HCT116 (cell line): ENCODE measurements at regions of chr11 and their contacts with region 1.

Region 1: GRCh38 chr11:128026596-128026995 is 560.8 kb downstream of the ETS1 start:
- DNase-seq: no peak
- ATAC-seq: no peak
- H3K4me3 ChIP-seq: no peak overlapping the region
- H3K27ac ChIP-seq: no peak overlapping the region
- H3K4me1 ChIP-seq: no peaks in the 10 kb centered on the region
- H3K27me3 ChIP-seq: no peaks in the 10 kb centered on the region
- CTCF ChIP-seq: no peak
- POLR2A ChIP-seq: no peak
- RAD21 ChIP-seq: no peak

Region 2: DNA sequence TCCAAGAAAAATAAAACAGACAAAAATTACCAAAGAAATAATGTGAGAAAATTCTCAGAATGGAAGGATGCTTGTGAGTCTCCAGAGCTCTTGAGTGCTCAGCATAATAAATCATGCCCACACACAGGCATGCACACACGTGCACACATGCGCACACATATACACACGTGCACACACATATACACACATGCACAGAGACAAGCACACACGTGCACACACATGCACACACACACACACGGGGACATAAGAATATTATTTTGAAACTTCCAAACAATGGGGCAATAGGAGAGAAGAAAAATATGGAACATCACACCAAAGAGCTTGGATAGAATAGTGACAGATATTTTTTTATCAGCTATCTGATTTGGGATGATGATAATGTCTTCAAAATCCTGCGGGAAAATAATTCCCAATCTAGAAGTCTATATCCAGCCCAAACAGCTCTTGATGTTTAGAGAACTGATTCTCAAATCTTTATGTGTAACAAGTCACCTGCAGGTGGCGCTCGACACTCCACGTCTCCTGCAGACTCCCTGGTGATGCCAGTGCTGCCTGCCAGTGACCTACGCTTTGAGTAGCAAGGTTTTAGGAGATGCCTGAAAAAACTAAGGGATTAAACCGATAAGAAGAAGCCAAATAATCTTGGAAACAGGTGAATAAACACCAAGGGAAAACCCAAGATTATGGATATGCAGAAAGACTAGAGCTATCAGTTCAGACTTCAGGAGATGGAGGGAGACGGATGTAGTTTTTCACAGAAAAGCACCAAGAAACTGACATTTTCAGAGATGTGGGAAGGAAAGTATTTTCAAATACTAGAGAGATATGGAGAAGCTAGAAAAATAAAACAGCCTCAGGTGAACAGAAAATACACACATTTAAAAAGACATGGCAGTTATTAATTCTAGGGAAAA is 182.9 kb before region 1 on chr11:
- CTCF ChIA-PET with region 1: no interaction called
- POLR2A ChIA-PET with region 1: no interaction called
- RAD21 ChIA-PET with region 1: no interaction called
- intact Hi-C with region 1: no loop called
- DNase-seq: no peak
- ATAC-seq: no peak
- H3K4me3 ChIP-seq: no peak overlapping the region
- H3K27ac ChIP-seq: no peak overlapping the region
- H3K4me1 ChIP-seq: no peaks in the 10 kb centered on the region
- H3K27me3 ChIP-seq: no peaks in the 10 kb centered on the region
- CTCF ChIP-seq: peak in 1 of 3 experiments; percentile 57; a peak in 3 of 6 replicates
- POLR2A ChIP-seq: no peak
- RAD21 ChIP-seq: no peak

Region 3: DNA sequence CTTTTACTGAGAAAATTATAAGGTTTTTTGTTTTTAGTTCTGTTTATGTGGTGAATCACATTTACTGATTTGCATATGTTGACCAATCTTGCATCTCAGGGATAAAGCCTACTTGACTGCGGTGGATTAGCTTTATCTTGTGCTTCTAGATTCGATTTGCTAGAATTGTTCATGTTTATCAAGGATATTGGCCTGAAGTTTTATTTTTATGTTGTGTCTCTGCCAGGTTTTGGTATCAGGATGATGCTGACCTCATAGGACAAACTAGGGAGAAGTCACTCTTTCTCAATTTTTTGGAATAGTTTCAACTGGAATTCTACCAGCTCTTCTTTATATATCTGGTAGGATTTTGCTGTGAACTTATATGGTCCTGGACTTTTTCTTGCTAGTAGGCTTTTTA is 56.0 kb after region 1 on chr11:
- CTCF ChIA-PET with region 1: no interaction called
- POLR2A ChIA-PET with region 1: no interaction called
- RAD21 ChIA-PET with region 1: no interaction called
- intact Hi-C with region 1: no loop called
- DNase-seq: no peak
- ATAC-seq: no peak
- H3K4me3 ChIP-seq: no peak overlapping the region
- H3K27ac ChIP-seq: no peak overlapping the region
- H3K4me1 ChIP-seq: no peaks in the 10 kb centered on the region
- H3K27me3 ChIP-seq: no peaks in the 10 kb centered on the region
- CTCF ChIP-seq: no peak
- POLR2A ChIP-seq: no peak
- RAD21 ChIP-seq: no peak

Region 4: DNA sequence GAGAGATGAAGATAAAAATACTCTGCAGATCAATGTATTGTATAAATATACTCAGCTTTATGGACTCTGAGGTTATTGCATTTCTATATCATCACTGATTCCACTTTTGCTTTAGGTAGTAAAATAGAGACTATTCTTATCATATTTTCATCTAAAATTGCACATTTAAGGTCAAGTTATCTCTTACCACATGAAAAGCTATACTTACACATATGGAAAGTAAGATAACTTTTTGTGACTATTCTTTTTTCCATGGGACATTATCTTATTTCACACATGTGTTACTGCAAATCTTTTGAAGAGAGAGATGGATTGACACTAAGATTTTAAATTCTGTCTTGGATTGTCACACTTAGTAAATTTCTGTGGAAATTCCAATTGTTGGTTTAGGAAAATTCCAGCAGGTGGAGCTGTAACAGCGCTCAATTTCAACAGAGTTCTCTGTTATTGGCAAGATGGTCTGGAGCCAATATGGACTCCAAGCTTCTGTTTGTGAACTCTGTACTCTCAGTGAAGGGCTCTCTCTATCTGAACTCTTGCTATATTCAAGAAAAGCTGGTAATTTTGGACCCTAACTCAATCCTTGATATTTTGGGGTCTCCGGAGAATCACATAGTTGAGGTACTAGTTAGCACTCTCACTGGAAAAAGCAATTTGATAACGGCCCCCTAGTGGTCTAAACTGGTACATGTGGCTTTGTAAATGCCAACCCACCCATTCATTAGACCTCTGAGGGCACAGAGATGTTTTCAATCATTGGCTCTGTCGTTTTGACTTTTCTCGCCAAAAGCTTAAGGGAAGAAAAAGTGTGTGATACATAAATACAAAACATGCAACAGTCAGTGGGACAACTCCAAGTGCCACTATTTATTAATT is 131.1 kb after region 1 on chr11:
- CTCF ChIA-PET with region 1: no interaction called
- POLR2A ChIA-PET with region 1: no interaction called
- RAD21 ChIA-PET with region 1: no interaction called
- intact Hi-C with region 1: loop called (anchors 1 kb)
- DNase-seq: peak; percentile 72
- ATAC-seq: peak; percentile 90
- H3K4me3 ChIP-seq: no peak overlapping the region
- H3K27ac ChIP-seq: no peak overlapping the region
- H3K4me1 ChIP-seq: no peaks in the 10 kb centered on the region; a peak in 1 of 4 replicates
- H3K27me3 ChIP-seq: peaks cover 18% of the 10 kb centered on the region; the same call in 1 of the 2 replicates
- CTCF ChIP-seq: peak; percentile 73 to 99 (median 94)
- POLR2A ChIP-seq: no peak
- RAD21 ChIP-seq: peak; percentile 78

Region 5: DNA sequence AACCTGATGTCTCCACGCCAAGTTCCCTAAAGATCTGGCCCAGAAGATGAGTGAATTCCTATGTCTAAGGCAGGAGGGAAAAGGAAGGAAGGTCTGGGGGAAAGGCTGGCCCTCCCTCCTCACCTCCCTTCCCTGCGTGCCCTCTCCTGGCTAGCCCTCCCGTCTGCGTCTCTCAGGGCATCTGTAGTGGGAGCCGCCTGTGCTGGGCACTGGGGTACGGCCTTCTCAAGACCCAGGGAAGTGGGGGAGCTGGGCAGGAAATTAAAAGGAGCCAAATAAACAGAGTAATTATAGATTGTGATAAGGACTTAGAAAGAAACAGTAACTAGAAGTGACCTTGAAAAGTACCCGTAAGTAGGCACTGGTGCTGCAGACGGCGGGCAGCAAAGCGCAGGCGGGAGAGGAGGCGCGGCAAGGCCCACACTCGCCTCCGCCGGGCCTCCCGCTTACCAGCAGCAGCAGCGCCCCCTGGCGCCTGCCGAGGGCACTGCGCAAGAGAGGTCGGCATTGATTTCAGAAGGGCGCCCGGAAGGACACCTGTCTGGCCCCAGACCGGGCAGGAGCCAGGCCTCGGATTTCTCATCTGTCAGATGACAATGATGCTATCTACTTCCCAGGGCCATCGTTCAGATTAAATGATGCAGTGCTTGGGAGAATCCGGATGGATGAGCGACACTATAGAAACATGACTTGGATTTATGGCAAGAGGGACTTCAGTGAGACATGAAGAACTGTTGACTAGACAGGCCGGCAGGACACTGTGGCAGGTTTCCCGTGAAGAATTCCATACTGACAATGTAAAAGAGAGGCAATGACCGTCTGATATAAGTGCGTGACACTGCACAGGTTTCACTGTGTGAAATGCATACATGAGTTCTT is 833.2 kb after region 1 on chr11:
- CTCF ChIA-PET with region 1: no interaction called
- POLR2A ChIA-PET with region 1: no interaction called
- RAD21 ChIA-PET with region 1: no interaction called
- intact Hi-C with region 1: loop called (anchors 2 kb)
- DNase-seq: peak; percentile 68
- ATAC-seq: peak; percentile 99
- H3K4me3 ChIP-seq: no peak overlapping the region; a peak in 1 of 4 replicates
- H3K27ac ChIP-seq: no peak overlapping the region
- H3K4me1 ChIP-seq: peaks cover 0 to 10% of the 10 kb centered on the region in 2 experiments; a peak in 1 of 4 replicates
- H3K27me3 ChIP-seq: peaks cover 2% of the 10 kb centered on the region; the same call in 1 of the 2 replicates
- CTCF ChIP-seq: peak; percentile 81 to 98 (median 97)
- POLR2A ChIP-seq: no peak
- RAD21 ChIP-seq: peak; percentile 67